Heart left ventricle (tissue), 16 donors: ENCODE measurements at regions of chr19 and their contacts with region 1.

Region 1: DNA sequence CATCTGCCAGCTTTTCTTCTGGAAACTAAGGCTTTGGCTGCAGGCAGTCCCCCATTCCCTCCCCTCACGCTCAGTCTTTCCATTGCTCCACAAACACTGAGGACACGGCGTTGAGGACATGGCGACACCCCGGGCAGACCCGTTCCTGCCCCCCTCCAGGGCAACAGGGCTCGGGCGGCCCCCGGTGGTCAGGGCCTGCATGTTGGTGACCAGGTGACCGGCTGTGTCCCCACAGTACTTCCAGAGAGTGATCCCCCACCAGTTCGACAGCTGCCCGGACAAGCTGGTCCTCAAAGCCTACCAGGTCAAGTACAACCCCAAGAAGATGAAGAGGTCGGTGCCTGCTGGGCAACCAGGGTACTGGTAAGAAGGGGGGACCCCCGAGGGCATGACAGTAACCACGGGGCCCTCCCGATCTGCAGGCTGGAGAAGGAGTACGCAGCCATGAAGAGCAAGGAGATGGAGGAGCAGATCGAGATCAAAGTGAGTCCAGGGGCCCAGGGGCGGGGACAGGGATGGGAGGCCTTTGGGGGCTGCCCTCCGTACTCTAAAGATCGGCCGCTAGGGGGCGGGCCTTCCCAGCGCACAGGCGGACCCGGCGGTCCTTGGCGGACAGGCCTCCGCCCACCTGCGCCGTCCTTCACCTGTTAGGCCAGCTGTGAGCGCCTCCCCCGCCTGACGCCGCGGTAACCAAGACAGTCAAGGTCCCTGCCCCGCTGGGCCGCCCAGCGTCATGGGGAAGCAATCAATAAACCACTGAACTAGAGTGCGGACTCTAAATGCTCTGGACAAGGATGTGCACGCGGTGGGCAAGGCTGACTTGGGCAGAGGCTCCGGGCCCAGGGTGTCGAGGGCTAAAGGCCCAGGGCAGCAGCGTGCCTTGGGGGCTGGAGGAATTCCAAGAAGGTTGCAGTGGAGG is 21.1 kb downstream of the PRR36 start:
- DNase-seq: peak in 4 of 5 donors; percentile 49 to 64 (median 54)
- ATAC-seq: peak; percentile 30 to 66 (median 56)
- H3K4me3 ChIP-seq: no peak overlapping the region
- H3K27ac ChIP-seq: no peak overlapping the region
- H3K4me1 ChIP-seq: peaks cover 0 to 21% (median 4%) of the 10 kb centered on the region in 12 donors
- H3K27me3 ChIP-seq: no peaks in the 10 kb centered on the region
- CTCF ChIP-seq: peak; percentile 68 to 92 (median 77)
- POLR2A ChIP-seq: no peak

Region 2: GRCh38 chr19:7925171-7925851 is 72.2 kb after region 1 on chr19:
- intact Hi-C with region 1: loop called in 7 of 10 experiments (anchors 2 to 5 kb)
- DNase-seq: peak in 3 of 5 donors; percentile 54 to 64 (median 63)
- ATAC-seq: no peak
- H3K4me3 ChIP-seq: peak overlapping the region; percentile 17 to 70 (median 45)
- H3K27ac ChIP-seq: peak overlapping the region in 1 of 12 donors; percentile 96
- H3K4me1 ChIP-seq: peaks cover 8 to 61% (median 38%) of the 10 kb centered on the region in 12 donors
- H3K27me3 ChIP-seq: no peaks in the 10 kb centered on the region
- CTCF ChIP-seq: peak; percentile 69 to 90 (median 78)
- POLR2A ChIP-seq: no peak